HCT116 (cell line): ENCODE measurements at regions of chrX and their contacts with region 1.

Region 1: DNA sequence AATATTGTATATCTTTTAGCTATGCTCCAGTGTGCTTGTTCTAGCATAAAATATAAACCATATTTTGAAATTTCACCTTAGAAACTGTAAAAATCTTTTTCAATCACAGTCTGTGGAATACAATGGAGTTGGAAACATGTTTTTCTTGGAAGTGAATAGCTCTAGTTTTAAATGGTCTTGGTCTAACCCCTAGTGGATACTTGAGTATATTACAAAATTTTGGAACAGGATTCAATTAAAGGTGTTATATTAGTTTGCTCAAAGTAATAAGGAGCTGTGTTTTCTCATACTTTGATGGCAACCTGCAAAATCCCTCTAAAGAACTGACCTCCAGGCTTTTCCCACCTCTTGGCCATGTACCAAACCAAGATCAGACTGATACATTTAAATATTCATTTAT is 48.2 kb downstream of the STK26 start:
- DNase-seq: no peak
- ATAC-seq: no peak
- H3K4me3 ChIP-seq: no peak overlapping the region
- H3K27ac ChIP-seq: no peak overlapping the region
- H3K4me1 ChIP-seq: no peaks in the 10 kb centered on the region
- H3K27me3 ChIP-seq: no peaks in the 10 kb centered on the region
- CTCF ChIP-seq: peak; percentile 7 to 38 (median 10); a peak in 2 of 6 replicates
- POLR2A ChIP-seq: no peak
- RAD21 ChIP-seq: peak; percentile 46; the same call in 1 of the 2 replicates

Region 2: DNA sequence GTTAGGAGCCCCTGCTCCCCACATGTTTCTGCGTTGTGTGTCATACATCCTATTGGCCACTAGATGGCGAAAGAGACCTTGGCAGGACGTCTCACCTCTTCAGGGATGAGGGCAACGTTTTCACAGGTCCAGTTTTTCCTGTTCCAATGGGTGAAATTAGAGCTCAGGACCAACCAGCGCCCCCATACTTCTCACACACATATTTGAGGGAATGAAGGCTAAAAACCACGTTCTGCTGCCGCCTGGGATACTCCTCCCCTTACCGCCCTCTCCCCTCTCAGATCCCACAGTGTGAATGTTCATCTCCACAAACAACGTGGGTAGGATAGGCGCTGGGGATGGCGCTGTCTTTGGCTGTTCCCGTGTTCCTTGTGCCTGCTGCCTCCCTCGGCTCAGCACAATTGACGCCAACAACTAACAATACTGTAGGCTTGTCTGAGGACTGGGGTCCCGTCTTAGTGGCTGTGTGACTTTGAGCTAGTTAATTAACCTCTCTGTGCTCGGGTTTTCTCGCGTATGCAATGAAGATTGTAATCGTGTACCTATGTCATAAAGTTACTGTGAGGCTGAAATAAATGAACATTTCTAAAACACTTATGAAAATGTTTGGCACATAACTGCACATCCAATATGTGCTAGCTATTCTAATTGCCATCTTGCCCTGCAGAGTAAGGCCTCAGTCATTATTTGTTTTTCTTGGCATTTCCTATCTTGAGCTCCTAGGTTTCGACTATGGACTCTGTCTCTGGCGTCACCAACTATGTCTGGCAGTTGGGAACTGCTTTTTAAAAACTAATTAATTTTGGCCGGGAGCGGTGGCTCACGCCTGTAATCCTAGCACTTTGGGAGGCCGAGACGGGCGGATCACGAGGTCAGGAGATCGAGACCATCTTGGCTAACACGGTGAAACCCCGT is 229.5 kb before region 1 on chrX:
- CTCF ChIA-PET with region 1: interaction called, 6 read pairs
- POLR2A ChIA-PET with region 1: no interaction called
- RAD21 ChIA-PET with region 1: no interaction called
- intact Hi-C with region 1: loop called (anchors 5 kb)
- DNase-seq: peak; percentile 40
- ATAC-seq: peak; percentile 95
- H3K4me3 ChIP-seq: no peak overlapping the region
- H3K27ac ChIP-seq: no peak overlapping the region
- H3K4me1 ChIP-seq: peaks cover 0 to 5% of the 10 kb centered on the region in 2 experiments; a peak in 1 of 4 replicates
- H3K27me3 ChIP-seq: no peaks in the 10 kb centered on the region
- CTCF ChIP-seq: peak; percentile 67 to 72 (median 68)
- POLR2A ChIP-seq: no peak
- RAD21 ChIP-seq: peak; percentile 84

Region 3: GRCh38 chrX:131854581-131854980 is 216.7 kb before region 1 on chrX:
- CTCF ChIA-PET with region 1: interaction called, 16 read pairs
- POLR2A ChIA-PET with region 1: no interaction called
- RAD21 ChIA-PET with region 1: no interaction called
- intact Hi-C with region 1: no loop called
- DNase-seq: no peak
- ATAC-seq: no peak
- H3K4me3 ChIP-seq: no peak overlapping the region
- H3K27ac ChIP-seq: no peak overlapping the region
- H3K4me1 ChIP-seq: no peaks in the 10 kb centered on the region
- H3K27me3 ChIP-seq: no peaks in the 10 kb centered on the region
- CTCF ChIP-seq: peak in 1 of 3 experiments; percentile 41; a peak in 2 of 6 replicates
- POLR2A ChIP-seq: no peak
- RAD21 ChIP-seq: peak; percentile 55

Region 4: GRCh38 chrX:132022967-132023895 is 48.0 kb before region 1 on chrX and contains the start of gene STK26:
- CTCF ChIA-PET with region 1: no interaction called
- POLR2A ChIA-PET with region 1: no interaction called
- RAD21 ChIA-PET with region 1: no interaction called
- intact Hi-C with region 1: loop called (anchors 1 kb)
- DNase-seq: peak; percentile 43
- ATAC-seq: peak; percentile 86
- H3K4me3 ChIP-seq: peak within 1 kb of the TSS; percentile 60 to 67
- H3K27ac ChIP-seq: peak within 1 kb of the TSS; percentile 90
- H3K4me1 ChIP-seq: peaks cover 0 to 6% of the 10 kb centered on the region in 2 experiments; a peak in 2 of 4 replicates
- H3K27me3 ChIP-seq: no peaks in the 10 kb centered on the region
- CTCF ChIP-seq: no peak
- POLR2A ChIP-seq: no peak
- RAD21 ChIP-seq: no peak
- total RNA-seq, gene STK26: 30.5 TPM

Region 5: GRCh38 chrX:132092439-132093065 is 21.3 kb after region 1 on chrX:
- CTCF ChIA-PET with region 1: interaction called, 10 read pairs
- POLR2A ChIA-PET with region 1: no interaction called
- RAD21 ChIA-PET with region 1: no interaction called
- intact Hi-C with region 1: no loop called
- DNase-seq: peak; percentile 52
- ATAC-seq: peak; percentile 96
- H3K4me3 ChIP-seq: no peak overlapping the region
- H3K27ac ChIP-seq: no peak overlapping the region
- H3K4me1 ChIP-seq: no peaks in the 10 kb centered on the region
- H3K27me3 ChIP-seq: no peaks in the 10 kb centered on the region
- CTCF ChIP-seq: peak; percentile 59 to 74 (median 65)
- POLR2A ChIP-seq: no peak
- RAD21 ChIP-seq: peak; percentile 68; the same call in 1 of the 2 replicates

Region 6: DNA sequence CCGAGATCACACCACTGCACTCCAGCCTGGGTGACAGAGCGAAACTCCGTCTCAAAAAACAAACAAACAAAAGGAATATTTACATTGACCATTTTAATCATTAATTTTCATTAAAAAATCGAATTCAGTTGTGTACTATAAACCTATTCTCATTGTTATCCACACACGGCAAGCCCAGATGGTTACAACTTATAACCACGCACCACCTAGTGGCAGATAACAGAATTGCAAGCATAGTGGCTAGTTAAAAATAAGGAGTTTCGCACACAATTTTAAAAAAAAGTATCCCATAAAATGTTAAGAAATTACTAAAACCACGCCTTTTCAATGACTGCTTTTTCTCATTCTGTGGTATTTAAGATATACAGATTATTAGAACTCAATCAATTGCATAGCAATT is 392.2 kb after region 1 on chrX:
- CTCF ChIA-PET with region 1: no interaction called
- POLR2A ChIA-PET with region 1: no interaction called
- RAD21 ChIA-PET with region 1: no interaction called
- intact Hi-C with region 1: no loop called
- DNase-seq: peak; percentile 8
- ATAC-seq: no peak
- H3K4me3 ChIP-seq: no peak overlapping the region
- H3K27ac ChIP-seq: no peak overlapping the region
- H3K4me1 ChIP-seq: no peaks in the 10 kb centered on the region
- H3K27me3 ChIP-seq: no peaks in the 10 kb centered on the region
- CTCF ChIP-seq: peak; percentile 25 to 62 (median 53); a peak in 5 of 6 replicates
- POLR2A ChIP-seq: no peak
- RAD21 ChIP-seq: peak; percentile 35; the same call in 1 of the 2 replicates